ENCODE measurements at regions of chr9 and their contacts with region 1.

Region 1: GRCh38 chr9:35489313-35490154 is at the start of gene RUSC2:
- DNase-seq: peak; percentile 65 to 95
- H3K4me3 ChIP-seq: peak within 1 kb of the TSS; percentile 59
- CTCF ChIP-seq: no peak
- POLR2A ChIP-seq: no peak
- total RNA-seq, gene RUSC2: 18.5 to 32.0 (median 30.1) TPM

Region 2: GRCh38 chr9:35333551-35333950 is 156.0 kb before region 1 on chr9:
- intact Hi-C with region 1: no loop called
- DNase-seq: no peak
- H3K4me3 ChIP-seq: no peak overlapping the region
- CTCF ChIP-seq: no peak
- POLR2A ChIP-seq: no peak

Region 3: GRCh38 chr9:35548571-35548970 is 59.0 kb after region 1 on chr9:
- intact Hi-C with region 1: loop called (anchors 5 kb)
- DNase-seq: no peak
- H3K4me3 ChIP-seq: no peak overlapping the region
- CTCF ChIP-seq: no peak
- POLR2A ChIP-seq: no peak

Measured in lower leg skin (tissue), 4 donors.